ENCODE measurements at regions of chr1 and their contacts with region 1.

Region 1: DNA sequence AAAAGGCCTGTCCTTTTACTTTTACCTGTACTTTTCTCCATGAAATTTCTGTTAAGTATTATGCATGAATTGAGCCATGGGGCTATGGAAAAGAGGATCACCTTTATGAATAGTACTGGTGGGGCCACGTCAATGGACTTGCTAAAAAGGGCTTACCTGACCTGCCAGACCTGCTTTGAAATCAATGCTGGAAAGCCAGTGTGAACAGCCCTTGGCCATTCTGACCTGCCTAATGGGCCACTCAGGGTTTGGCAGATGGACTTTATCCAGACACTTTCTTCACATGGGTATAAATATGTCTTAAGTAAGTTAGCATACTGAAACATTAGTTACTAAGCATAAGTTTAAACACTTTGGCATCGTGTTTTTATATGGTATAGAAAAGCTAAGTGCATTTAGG is 8.3 kb upstream of the GUK1 start:
- DNase-seq: no peak
- ATAC-seq: no peak
- H3K4me3 ChIP-seq: no peak overlapping the region
- H3K27ac ChIP-seq: no peak overlapping the region
- H3K4me1 ChIP-seq: no peaks in the 10 kb centered on the region
- CTCF ChIP-seq: no peak
- EP300 ChIP-seq: no peak
- POLR2A ChIP-seq: no peak
- RAD21 ChIP-seq: no peak

Region 2: DNA sequence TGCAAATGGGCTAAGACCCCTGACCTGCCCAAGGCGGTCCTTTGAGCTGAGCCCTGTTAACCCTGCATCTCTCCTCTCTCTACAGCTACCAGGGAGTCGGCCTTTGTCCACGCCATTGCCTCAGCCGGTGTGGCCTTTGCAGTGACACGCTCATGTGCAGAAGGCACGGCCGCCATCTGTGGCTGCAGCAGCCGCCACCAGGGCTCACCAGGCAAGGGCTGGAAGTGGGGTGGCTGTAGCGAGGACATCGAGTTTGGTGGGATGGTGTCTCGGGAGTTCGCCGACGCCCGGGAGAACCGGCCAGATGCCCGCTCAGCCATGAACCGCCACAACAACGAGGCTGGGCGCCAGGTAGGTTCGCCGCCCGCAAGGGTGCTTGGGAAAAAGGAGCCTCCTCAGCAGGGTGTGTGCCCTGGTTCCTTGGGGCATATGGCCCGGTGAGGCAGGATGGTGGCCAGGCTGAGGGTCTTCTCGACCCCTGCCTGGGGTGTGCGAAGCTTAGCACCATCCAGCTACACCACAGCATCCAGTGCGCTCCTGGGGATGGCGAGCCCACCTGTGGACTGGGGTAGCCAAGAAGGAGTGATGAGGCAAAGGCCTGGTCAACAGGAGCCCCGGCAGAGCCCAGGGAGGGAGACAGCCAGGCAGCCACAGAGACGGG is 81.1 kb before region 1 on chr1:
- CTCF ChIA-PET with region 1: no interaction called
- POLR2A ChIA-PET with region 1: no interaction called
- DNase-seq: no peak
- ATAC-seq: no peak
- H3K4me3 ChIP-seq: no peak overlapping the region
- H3K27ac ChIP-seq: no peak overlapping the region
- H3K4me1 ChIP-seq: no peaks in the 10 kb centered on the region
- CTCF ChIP-seq: no peak
- EP300 ChIP-seq: no peak
- POLR2A ChIP-seq: no peak
- RAD21 ChIP-seq: no peak

Region 3: DNA sequence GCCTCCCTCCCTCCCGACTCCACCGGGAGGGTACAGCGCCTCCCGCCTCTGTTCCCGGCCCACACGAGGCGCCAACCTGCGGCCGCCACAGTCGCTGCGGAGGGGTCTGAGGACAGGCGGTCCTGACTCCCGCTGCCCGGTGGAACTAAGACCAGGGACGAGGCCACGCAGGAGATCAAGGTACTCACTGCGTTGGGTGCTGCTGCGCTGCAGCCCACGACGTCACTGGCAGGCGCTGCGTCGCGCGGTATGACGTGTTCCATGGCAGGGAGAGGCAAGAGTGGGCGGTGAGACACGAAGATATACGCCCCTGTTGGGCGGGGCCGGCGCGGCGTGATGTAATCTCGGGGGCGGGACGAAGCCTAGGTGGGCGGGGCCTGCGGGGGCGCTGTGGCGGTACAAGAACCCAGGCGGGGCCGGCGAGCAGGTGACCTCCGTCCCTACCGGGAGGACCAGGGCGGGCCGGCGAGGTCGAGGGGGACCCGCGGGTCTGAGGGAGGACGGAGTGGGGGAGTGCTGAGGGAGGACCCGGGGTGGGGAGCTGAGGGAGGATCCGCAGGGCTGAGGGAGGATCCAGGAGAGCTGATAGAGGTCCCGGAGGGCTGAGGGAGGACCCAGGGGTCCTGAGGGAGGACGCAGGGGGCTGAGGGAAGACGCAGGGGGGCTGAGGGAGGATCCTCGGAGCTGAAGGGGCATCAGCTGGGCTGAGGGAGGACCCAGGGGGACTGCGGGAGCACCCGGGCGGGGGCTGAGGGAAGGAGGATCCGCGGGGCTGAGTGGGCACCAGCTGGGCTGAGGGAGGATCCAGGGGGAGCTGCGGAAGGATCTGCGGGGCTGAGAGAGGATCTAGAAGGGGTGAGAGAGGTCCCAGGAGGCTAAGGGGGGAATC is 22.4 kb before region 1 on chr1 and contains the start of gene MRPL55:
- CTCF ChIA-PET with region 1: interaction called, 28 read pairs
- POLR2A ChIA-PET with region 1: no interaction called
- DNase-seq: peak; percentile 86 to 96
- ATAC-seq: peak; percentile 83 to 93
- H3K4me3 ChIP-seq: peak within 1 kb of the TSS; percentile 98
- H3K27ac ChIP-seq: peak within 1 kb of the TSS; percentile 90 to 94
- H3K4me1 ChIP-seq: peaks cover 12% of the 10 kb centered on the region; the same call in 2 of the 3 replicates
- CTCF ChIP-seq: 0 out of 3 replicates have a peak, but pooled peaks have one; percentile 12
- EP300 ChIP-seq: peak in 1 of 2 experiments; percentile 26; a peak in 1 of 5 replicates
- POLR2A ChIP-seq: peak; percentile 96
- RAD21 ChIP-seq: no peak
- polyA plus RNA-seq, gene MRPL55: 54.2 and 59.7 TPM in 2 replicates

Region 4: DNA sequence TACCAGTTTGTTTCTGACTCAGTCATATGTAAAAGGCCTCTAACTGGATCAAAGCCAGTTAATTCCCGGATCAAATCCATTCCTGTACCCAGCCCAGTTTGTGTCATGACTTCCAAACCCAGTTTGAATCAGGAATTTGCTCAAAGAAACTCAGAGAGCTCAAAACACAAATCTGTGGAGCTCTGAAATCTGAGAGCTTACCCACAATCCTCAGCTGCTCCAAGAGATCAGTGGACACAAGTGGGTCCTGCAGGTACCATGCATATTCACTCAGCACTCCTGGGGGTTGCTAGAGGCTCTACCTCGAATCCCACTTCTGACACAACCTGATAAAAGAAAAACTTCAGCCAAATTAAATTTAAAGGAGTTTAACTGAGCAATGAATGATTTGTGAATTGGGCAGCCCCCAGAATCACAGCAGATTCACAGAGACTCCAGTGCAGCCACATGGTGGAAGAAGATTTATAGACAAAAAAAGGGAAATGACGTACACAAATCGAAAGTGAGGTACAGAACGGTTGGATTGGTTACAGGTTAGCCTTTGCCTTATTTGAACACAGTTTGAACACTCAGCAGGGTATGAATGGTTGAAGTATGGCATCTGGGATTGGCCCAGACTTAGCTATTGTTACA is 10.8 kb before region 1 on chr1:
- CTCF ChIA-PET with region 1: interaction called, 28 read pairs
- POLR2A ChIA-PET with region 1: no interaction called
- DNase-seq: no peak
- ATAC-seq: 0 out of 6 replicates have a peak, but pooled peaks of 1 of the 2 experiments have one; percentile 40
- H3K4me3 ChIP-seq: no peak overlapping the region
- H3K27ac ChIP-seq: no peak overlapping the region
- H3K4me1 ChIP-seq: no peaks in the 10 kb centered on the region
- CTCF ChIP-seq: no peak
- EP300 ChIP-seq: no peak
- POLR2A ChIP-seq: no peak
- RAD21 ChIP-seq: no peak

Region 5: DNA sequence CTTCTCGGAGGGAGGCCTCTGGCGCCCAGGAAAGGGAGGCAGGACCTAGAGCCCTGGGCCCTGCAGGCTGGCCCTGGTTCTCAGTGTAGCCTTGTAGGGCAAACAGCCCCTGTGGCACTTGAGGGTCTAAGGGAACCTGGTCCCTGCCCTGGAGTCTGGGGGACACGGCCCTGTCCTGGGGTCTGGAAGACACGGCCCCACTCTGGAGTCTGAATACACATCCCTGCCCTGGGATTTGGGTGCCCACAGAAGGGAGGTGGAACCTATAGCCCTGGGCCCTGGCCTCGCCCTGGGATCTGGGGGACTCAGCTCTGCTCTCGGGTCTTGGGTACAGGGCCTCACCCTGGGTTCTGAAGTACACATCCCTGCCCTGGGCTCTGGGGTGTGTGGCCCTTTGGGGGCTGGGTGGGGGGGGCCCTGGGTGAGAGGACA is 174.0 kb after region 1 on chr1:
- CTCF ChIA-PET with region 1: no interaction called
- POLR2A ChIA-PET with region 1: no interaction called
- DNase-seq: no peak
- ATAC-seq: no peak
- H3K4me3 ChIP-seq: no peak overlapping the region
- H3K27ac ChIP-seq: no peak overlapping the region
- H3K4me1 ChIP-seq: no peaks in the 10 kb centered on the region
- CTCF ChIP-seq: no peak
- EP300 ChIP-seq: no peak
- POLR2A ChIP-seq: no peak
- RAD21 ChIP-seq: no peak

Measured in A549 (cell line).